MCF 10A (cell line): ENCODE measurements at regions of chr1 and their contacts with region 1.

Region 1: GRCh38 chr1:172398970-172399755 is 21.3 kb upstream of the C1orf105 start:
- DNase-seq: peak; percentile 67
- H3K4me3 Mint-ChIP-seq: peak overlapping the region; percentile 26
- H3K27ac Mint-ChIP-seq: peak overlapping the region; percentile 21
- H3K4me1 Mint-ChIP-seq: peaks cover 33% of the 10 kb centered on the region
- H3K27me3 Mint-ChIP-seq: no peaks in the 10 kb centered on the region
- CTCF ChIP-seq: peak; percentile 77

Region 2: GRCh38 chr1:172041742-172042141 is 357.4 kb before region 1 on chr1:
- CTCF ChIA-PET with region 1: interaction called, 20 read pairs
- POLR2A ChIA-PET with region 1: interaction called, 5 read pairs
- intact Hi-C with region 1: no loop called
- DNase-seq: peak; percentile 16
- H3K4me3 Mint-ChIP-seq: no peak overlapping the region
- H3K27ac Mint-ChIP-seq: no peak overlapping the region
- H3K4me1 Mint-ChIP-seq: peaks cover 21% of the 10 kb centered on the region
- H3K27me3 Mint-ChIP-seq: no peaks in the 10 kb centered on the region
- CTCF ChIP-seq: peak; percentile 19

Region 3: GRCh38 chr1:172185211-172185610 is 214.0 kb before region 1 on chr1:
- CTCF ChIA-PET with region 1: no interaction called
- POLR2A ChIA-PET with region 1: no interaction called
- intact Hi-C with region 1: no loop called
- DNase-seq: no peak
- H3K4me3 Mint-ChIP-seq: no peak overlapping the region
- H3K27ac Mint-ChIP-seq: no peak overlapping the region
- H3K4me1 Mint-ChIP-seq: peaks cover 16% of the 10 kb centered on the region
- H3K27me3 Mint-ChIP-seq: no peaks in the 10 kb centered on the region
- CTCF ChIP-seq: no peak

Region 4: DNA sequence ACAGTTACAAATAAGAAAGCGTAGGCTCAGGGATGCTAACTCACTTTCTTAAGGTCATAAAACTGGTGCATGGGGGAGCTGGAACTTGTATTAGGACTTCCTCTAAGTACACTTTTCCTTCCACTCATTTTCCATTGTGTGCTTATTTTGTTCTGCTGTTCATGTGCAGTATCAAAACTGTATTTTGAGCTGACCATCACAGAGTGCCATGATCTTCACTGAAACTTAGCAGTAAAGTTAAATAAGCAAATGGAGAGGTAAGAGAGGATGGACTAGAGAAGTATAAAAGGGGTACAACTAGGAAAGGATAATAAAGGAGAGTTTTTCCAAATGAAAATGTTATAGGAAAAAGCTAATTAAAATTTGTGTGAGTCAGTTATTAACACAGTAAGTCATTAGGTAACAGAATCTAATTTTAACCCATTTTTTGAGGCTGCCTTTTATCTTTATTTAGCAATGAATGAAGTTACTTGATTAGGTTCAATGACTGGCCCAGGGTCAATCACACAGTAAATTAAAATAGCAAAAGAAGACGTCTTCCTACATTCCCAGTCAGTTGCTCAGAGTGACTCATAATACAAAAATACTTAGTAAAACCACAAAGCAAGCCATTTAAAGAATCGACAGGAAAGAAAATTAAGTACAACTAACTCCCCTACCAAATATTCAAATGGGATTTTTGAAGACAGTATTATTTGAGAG is 144.5 kb before region 1 on chr1:
- CTCF ChIA-PET with region 1: interaction called, 3 read pairs
- POLR2A ChIA-PET with region 1: no interaction called
- intact Hi-C with region 1: loop called (anchors 2 kb)
- DNase-seq: peak; percentile 78
- H3K4me3 Mint-ChIP-seq: no peak overlapping the region
- H3K27ac Mint-ChIP-seq: peak overlapping the region; percentile 5
- H3K4me1 Mint-ChIP-seq: peaks cover 18% of the 10 kb centered on the region
- H3K27me3 Mint-ChIP-seq: no peaks in the 10 kb centered on the region
- CTCF ChIP-seq: no peak

Region 5: DNA sequence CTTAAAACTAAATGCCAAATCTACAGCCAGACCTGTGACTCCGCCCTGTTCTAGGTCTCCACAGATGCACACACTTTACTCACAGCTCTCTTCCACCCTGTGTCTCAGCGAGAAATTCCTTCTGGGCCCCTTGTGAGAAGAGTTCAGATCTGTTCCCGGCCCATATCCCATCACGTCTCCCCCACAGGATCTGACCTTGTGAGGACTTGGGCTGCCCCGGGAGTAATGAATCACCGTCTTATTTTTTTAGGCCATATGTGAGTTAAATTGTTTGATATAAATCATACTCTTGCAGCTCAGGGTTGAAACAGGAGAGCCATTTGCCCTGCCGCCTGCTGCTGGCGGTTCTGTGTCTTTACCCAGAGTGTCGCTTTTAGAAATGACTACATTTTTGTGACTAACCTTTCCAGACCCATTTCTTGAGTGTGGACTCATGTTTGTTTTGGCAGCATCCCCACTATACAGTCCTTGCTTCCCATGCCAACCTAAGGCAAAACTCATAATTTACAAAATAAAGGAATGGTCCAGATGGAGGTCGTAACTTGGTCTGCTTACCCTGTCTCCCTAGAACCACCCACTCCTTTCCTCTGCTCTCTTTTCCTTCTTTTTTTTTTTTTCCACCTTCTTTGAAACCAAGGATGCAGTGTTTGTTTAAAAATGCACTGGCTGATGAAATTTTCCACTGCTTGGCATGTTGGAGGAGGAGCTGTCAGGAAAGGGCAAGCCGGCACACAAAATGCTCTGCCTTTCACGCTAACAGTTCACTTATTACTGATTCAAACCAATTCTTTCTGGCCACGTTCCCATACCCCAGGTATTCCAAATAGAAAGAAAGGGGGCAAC is 76.7 kb before region 1 on chr1:
- CTCF ChIA-PET with region 1: interaction called, 3 read pairs
- POLR2A ChIA-PET with region 1: interaction called, 4 read pairs
- intact Hi-C with region 1: loop called (anchors 1 kb)
- DNase-seq: peak; percentile 89
- H3K4me3 Mint-ChIP-seq: no peak overlapping the region
- H3K27ac Mint-ChIP-seq: no peak overlapping the region
- H3K4me1 Mint-ChIP-seq: peaks cover 13% of the 10 kb centered on the region
- H3K27me3 Mint-ChIP-seq: no peaks in the 10 kb centered on the region
- CTCF ChIP-seq: no peak

Region 6: GRCh38 chr1:172417552-172417951 is 18.4 kb after region 1 on chr1:
- CTCF ChIA-PET with region 1: interaction called, 10 read pairs
- POLR2A ChIA-PET with region 1: interaction called, 3 read pairs
- intact Hi-C with region 1: no loop called
- DNase-seq: peak; percentile 30
- H3K4me3 Mint-ChIP-seq: no peak overlapping the region
- H3K27ac Mint-ChIP-seq: no peak overlapping the region
- H3K4me1 Mint-ChIP-seq: peaks cover 7% of the 10 kb centered on the region
- H3K27me3 Mint-ChIP-seq: no peaks in the 10 kb centered on the region
- CTCF ChIP-seq: no peak

Region 7: GRCh38 chr1:172682812-172683211 is 283.6 kb after region 1 on chr1:
- CTCF ChIA-PET with region 1: no interaction called
- POLR2A ChIA-PET with region 1: no interaction called
- intact Hi-C with region 1: no loop called
- DNase-seq: no peak
- H3K4me3 Mint-ChIP-seq: no peak overlapping the region
- H3K27ac Mint-ChIP-seq: no peak overlapping the region
- H3K4me1 Mint-ChIP-seq: no peaks in the 10 kb centered on the region
- H3K27me3 Mint-ChIP-seq: no peaks in the 10 kb centered on the region
- CTCF ChIP-seq: no peak